ENCODE measurements at regions of chr4 and their contacts with region 1.

Region 1: DNA sequence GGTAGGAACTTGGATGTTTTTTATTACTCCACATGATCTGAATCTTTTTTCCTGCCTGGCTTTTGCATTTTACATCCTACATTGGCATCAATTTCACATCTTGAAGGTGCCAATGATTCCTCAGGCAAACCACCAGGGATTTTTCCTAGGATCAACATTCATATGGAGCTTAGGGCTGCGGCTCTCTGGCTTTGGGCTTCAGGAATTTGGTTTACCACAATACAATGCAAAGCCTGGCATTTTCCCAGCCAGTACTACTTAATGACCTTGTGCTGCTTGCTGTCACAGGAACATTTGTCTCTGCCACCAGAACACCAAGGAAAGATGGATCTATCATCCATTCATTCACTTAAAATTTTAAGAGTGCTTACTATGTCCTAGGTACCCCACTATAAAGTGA is 180.7 kb downstream of the PDGFC start:
- DNase-seq: peak in 2 of 5 donors; percentile 32
- ATAC-seq: peak; percentile 66 to 75 (median 70)
- H3K4me3 ChIP-seq: no peak overlapping the region
- H3K27ac ChIP-seq: no peak overlapping the region
- H3K4me1 ChIP-seq: peaks cover 0 to 29% (median 9%) of the 10 kb centered on the region in 12 donors
- H3K27me3 ChIP-seq: no peaks in the 10 kb centered on the region
- CTCF ChIP-seq: no peak
- POLR2A ChIP-seq: no peak

Region 2: DNA sequence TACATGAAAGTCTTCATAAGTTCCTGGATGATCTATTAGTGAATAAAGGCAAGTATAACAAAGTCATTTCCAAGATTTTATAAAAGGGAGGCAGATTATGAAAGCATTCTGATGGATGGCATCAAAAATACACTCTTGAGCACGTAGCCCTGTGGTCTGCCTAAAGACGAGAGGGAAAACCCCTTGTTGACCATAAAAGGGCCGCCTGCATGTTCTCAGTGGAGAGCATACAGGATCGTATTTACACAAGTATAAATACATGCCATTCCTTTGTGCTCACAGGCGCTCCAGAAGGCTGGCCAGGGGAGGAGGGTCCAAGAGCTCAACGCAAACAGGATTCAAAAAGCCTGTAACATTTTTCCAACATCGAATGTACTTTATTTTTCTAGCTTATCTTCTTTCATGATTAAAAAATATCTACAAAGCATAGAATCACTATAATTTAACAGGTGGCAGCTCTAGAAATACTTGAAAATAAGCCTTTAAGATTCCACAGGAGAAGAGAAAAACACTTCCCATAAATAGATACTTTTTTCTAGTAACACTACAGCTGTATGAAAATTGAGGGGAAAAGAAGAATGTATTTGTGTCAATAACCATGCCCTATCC is 151.2 kb after region 1 on chr4:
- intact Hi-C with region 1: loop called in 1 of 10 experiments (anchors 10 kb)
- DNase-seq: peak in 4 of 5 donors; percentile 21 to 55 (median 42)
- ATAC-seq: peak; percentile 74 to 89 (median 83)
- H3K4me3 ChIP-seq: peak overlapping the region in 8 of 12 donors; percentile 16 to 44 (median 28)
- H3K27ac ChIP-seq: peak overlapping the region in 8 of 12 donors; percentile 18 to 75 (median 52)
- H3K4me1 ChIP-seq: peaks cover 0 to 59% (median 18%) of the 10 kb centered on the region in 12 donors
- H3K27me3 ChIP-seq: no peaks in the 10 kb centered on the region
- CTCF ChIP-seq: no peak
- POLR2A ChIP-seq: no peak